Astrocyte of the cerebellum (primary cell): ENCODE measurements at regions of chr16 and their contacts with region 1.

Region 1: DNA sequence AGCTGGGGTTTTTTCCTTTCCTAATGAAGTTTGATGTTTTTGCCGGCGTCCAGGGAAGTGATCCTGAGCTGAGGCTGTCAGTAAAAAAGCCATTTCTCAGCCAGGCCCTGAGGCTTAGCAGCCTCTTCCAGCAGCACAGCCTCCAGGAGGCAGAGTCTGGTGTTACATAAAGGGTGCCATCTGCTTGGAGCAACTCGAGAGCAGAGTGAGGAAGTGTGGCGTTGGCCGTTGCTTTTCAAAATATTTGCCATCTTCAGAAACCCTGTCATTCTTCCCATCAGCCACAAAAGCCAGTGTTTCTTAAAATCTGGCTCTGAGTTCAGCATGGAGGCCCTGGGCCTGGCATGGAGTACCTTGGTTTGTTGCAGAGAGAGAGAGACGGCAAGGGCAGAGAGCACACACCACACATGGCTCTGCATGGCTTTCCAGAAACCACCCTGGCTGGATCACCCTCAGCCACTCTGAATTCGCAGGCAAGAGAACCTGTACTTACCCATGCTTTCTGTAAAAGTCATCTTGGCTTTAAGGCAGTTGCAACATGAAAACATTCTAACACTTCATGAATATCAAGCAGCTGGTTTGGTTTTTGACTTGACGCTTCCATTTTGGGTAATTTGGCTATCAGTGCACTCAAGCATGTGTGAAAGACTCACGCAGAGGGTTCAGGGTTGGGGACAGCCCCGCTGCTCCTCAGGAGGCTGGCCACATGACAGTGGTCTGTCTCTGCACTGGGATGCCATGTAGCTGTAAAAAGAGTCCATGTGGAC is 21.0 kb downstream of the PMM2 start:
- DNase-seq: no peak
- H3K4me3 ChIP-seq: no peak overlapping the region
- CTCF ChIP-seq: no peak

Region 2: DNA sequence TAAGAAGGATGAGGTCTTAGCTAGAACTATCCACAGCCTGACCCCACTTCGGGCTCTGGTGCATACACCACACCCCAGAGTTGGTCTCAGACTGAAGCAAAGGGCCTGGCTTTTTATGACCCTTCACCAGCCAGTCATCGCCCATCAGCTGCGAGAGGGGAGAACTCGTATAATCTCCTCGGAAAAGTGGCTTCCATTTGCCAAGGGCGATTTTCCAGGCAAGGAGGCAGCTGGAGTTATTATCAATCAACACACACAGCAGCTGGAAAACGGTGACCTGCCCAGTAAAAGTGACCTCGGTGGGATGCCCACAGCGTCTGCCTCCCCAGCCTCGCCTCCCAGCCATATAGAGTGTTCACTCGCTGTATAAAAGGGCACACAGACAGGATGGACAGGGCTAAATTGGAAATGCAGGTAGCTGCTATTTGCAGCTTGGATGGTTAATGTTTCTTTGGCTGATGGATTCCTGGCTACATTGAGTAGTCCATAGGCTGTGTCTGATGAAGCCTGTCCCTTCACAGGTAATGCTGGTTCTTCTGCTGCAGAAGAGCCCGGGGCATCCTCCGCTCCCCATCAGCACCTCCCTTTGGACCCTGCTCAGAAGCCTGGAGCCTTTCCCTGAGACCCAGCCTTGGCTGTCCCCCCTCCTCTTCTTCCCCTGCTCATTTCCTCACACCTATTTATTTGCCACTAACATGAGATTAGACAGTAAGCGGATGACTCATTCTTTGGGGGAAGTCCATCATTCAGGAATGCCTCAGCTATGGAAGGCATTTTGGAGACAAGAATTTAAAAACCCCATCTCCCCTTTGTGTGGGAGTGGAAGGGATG is 67.0 kb before region 1 on chr16:
- in situ Hi-C with region 1: no loop called
- DNase-seq: peak; percentile 37
- H3K4me3 ChIP-seq: no peak overlapping the region
- CTCF ChIP-seq: no peak

Region 3: GRCh38 chr16:8905168-8905762 is 86.6 kb after region 1 on chr16:
- in situ Hi-C with region 1: loop called (anchors 25 kb)
- DNase-seq: no peak
- H3K4me3 ChIP-seq: no peak overlapping the region
- CTCF ChIP-seq: peak; percentile 72